Mammary epithelial cell (primary cell): ENCODE measurements at regions of chr13 and their contacts with region 1.

Region 1: GRCh38 chr13:48615049-48615448 is 38.7 kb upstream of the CYSLTR2 start:
- DNase-seq: no peak
- H3K4me3 ChIP-seq: no peak overlapping the region
- H3K27ac ChIP-seq: no peak overlapping the region
- H3K4me1 ChIP-seq: no peaks in the 10 kb centered on the region
- H3K27me3 ChIP-seq: no peaks in the 10 kb centered on the region
- CTCF ChIP-seq: no peak

Region 2: GRCh38 chr13:48653472-48653939 is 38.5 kb after region 1 on chr13 and contains the start of gene CYSLTR2:
- CTCF ChIA-PET with region 1: no interaction called
- dilution Hi-C with region 1: loop called (anchors 5 kb)
- in situ Hi-C with region 1: no loop called
- intact Hi-C with region 1: no loop called
- DNase-seq: no peak
- H3K4me3 ChIP-seq: no peak within 1 kb of the TSS
- H3K27ac ChIP-seq: no peak within 1 kb of the TSS
- H3K4me1 ChIP-seq: no peaks in the 10 kb centered on the region
- H3K27me3 ChIP-seq: no peaks in the 10 kb centered on the region
- CTCF ChIP-seq: no peak
- total RNA-seq, gene CYSLTR2: not detected

Region 3: DNA sequence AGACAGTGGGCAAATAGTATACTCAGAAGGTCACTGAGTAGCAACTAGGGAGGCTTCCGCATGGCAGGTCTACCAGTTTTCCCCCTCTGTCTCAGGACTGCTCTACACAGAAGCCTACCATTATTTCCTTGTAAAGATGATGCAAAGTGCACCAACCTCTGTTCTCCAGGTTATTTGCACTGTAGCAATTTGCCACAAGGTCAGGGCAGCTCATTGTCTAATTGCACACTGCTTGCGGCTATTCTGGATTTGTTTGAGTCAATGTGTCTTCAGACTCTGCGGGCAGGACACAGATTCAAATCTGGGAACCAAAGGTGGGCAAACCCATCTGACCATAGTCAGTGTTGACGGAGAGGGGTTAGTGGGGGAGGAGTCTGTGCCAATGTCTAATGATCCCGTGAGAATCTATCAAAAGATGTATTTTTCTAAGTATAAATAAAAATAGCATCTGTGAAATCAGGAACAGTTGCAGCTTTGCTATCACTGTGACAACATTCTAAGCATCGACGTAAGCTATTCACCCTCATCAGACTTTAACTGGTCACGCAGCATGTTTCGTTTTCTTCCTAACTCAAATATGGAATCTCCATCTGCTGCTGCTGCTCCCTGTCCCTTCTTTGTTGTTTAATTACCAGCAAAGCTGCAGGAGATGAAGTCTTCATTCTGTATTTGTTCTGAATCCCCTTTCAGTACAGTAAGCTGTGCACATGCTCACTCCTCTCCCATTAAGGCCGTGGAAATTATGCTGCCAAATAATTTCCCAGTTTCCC is 65.0 kb after region 1 on chr13:
- CTCF ChIA-PET with region 1: no interaction called
- dilution Hi-C with region 1: loop called (anchors 5 kb)
- in situ Hi-C with region 1: no loop called
- intact Hi-C with region 1: loop called (anchors 5 kb)
- DNase-seq: no peak
- H3K4me3 ChIP-seq: no peak overlapping the region
- H3K27ac ChIP-seq: no peak overlapping the region
- H3K4me1 ChIP-seq: no peaks in the 10 kb centered on the region
- H3K27me3 ChIP-seq: no peaks in the 10 kb centered on the region
- CTCF ChIP-seq: no peak